ENCODE measurements at regions of chr14 and their contacts with region 1.

Region 1: GRCh38 chr14:105398044-105398725 is at the start of gene TEX22:
- DNase-seq: peak; percentile 95
- ATAC-seq: peak; percentile 94
- H3K4me3 Mint-ChIP-seq: peak within 1 kb of the TSS; percentile 91
- H3K27ac Mint-ChIP-seq: peak within 1 kb of the TSS; percentile 92
- H3K4me1 Mint-ChIP-seq: peaks cover 23% of the 10 kb centered on the region
- H3K27me3 Mint-ChIP-seq: no peaks in the 10 kb centered on the region
- CTCF ChIP-seq: no peak
- total RNA-seq, gene TEX22: 1.2 to 2.2 TPM

Region 2: DNA sequence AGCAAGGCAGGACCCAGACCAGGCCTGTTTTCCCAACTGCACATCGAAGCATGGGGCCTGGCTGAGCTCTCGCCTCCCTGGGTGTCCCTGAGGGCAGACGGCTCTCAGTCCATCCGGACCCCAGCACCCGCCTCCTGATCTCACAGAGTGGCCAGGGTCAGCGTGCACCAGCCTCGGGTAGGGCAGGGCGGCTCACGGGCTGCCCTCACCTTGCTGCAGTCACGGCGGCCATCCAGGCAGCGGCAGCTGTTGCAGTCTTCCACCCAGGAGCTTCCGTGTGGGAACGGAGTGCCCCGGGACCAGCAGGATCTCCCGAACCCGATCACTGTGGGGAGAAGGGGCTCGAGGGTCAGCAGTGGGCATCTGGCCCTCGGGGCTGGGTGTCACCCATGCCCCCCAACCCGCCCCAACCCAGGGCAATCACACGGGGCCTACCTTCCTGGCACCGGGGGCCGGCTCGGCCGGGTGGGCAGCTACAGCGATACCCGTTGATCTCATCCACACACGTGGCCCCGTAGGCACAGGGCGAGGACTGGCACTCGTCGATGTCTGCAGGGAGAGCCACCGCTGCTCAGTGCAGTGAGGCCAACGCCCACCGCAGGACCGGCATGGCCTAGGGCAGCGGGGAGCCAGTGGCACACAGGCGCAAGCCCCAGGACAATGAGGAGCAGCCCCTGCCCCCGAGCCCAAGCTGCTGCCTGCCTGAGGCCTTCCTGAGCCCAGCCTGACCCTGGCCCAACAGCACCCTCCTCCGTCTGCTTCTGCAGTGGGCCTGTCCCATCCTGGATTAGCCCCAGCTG is 251.8 kb before region 1 on chr14:
- CTCF ChIA-PET with region 1: no interaction called
- POLR2A ChIA-PET with region 1: no interaction called
- intact Hi-C with region 1: no loop called
- DNase-seq: no peak
- ATAC-seq: no peak
- H3K4me3 Mint-ChIP-seq: no peak overlapping the region
- H3K27ac Mint-ChIP-seq: no peak overlapping the region
- H3K4me1 Mint-ChIP-seq: no peaks in the 10 kb centered on the region
- H3K27me3 Mint-ChIP-seq: no peaks in the 10 kb centered on the region
- CTCF ChIP-seq: no peak

Region 3: DNA sequence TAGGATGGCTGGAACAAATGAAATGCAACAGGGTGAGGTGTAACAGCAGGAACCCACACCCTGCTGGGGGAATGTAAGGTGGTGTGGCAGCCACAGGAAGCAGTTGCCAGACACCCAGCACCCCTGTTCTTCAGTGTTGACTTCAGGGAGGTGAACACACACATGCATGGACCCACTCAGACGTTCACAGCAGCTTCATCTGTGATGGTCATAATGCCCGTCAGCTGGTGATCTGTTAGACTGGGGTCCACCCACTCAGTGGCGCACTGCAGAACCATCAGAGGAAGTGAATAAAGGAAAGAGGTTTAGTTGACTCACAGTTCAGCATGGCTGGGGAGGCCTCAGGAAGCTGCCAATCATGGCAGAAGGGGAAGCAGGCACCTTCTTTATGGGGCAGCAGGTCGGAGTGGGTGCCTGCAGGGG is 22.5 kb before region 1 on chr14:
- CTCF ChIA-PET with region 1: interaction called, 17 read pairs
- POLR2A ChIA-PET with region 1: no interaction called
- intact Hi-C with region 1: no loop called
- DNase-seq: peak; percentile 92
- ATAC-seq: peak; percentile 83
- H3K4me3 Mint-ChIP-seq: no peak overlapping the region
- H3K27ac Mint-ChIP-seq: peak overlapping the region; percentile 67
- H3K4me1 Mint-ChIP-seq: peaks cover 13% of the 10 kb centered on the region
- H3K27me3 Mint-ChIP-seq: no peaks in the 10 kb centered on the region
- CTCF ChIP-seq: no peak

Region 4: DNA sequence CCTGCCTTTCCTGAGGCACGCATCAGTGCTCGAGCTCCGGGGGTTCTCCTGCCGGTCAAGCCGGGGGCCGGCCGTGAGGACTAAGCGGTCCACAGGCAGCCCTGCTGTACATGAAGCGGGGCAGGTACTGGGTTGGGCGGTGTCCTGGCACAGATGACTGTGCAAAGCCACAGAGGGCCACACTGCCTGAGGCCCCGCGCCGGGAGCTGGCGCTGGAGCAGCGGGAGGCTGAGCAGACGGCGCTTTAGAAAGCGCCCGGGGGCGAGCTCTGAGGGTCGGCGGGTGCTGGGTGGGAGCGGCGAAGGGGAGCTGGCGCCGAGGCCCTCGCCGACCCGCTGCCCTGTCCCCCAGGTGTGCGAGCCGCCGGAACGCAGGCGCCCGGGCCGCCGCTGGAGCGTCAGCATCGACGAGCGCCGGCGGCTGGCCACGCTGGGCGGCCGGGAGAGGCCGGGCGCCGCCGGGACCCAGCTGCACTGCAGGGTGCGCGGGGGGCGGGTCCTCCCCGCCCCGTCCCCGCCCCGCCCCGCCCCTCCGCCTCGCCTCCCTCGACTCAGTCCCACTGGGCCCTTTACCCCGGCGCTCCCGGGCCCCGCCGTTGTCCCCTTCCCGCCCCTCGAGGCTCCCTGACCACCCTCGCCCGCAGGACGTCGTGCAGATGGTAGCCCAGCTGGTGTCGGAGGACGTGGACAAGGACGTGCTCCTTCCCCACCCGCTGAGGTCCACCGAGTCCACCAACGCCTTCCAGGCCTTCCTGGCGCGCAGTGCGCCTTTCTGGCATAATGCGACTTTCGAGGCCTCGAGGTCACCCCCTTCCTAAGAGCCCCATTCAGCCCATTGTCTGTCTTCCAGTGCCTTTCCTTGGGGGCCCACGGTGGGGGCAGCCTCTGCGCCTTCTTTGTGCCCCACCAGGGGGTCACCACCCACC is 13.1 kb after region 1 on chr14:
- CTCF ChIA-PET with region 1: interaction called, 8 read pairs
- POLR2A ChIA-PET with region 1: interaction called, 14 read pairs
- intact Hi-C with region 1: no loop called
- DNase-seq: peak; percentile 21
- ATAC-seq: peak; percentile 40
- H3K4me3 Mint-ChIP-seq: peak overlapping the region; percentile 19
- H3K27ac Mint-ChIP-seq: no peak overlapping the region
- H3K4me1 Mint-ChIP-seq: peaks cover 12% of the 10 kb centered on the region
- H3K27me3 Mint-ChIP-seq: peaks cover 24% of the 10 kb centered on the region
- CTCF ChIP-seq: no peak

Region 5: DNA sequence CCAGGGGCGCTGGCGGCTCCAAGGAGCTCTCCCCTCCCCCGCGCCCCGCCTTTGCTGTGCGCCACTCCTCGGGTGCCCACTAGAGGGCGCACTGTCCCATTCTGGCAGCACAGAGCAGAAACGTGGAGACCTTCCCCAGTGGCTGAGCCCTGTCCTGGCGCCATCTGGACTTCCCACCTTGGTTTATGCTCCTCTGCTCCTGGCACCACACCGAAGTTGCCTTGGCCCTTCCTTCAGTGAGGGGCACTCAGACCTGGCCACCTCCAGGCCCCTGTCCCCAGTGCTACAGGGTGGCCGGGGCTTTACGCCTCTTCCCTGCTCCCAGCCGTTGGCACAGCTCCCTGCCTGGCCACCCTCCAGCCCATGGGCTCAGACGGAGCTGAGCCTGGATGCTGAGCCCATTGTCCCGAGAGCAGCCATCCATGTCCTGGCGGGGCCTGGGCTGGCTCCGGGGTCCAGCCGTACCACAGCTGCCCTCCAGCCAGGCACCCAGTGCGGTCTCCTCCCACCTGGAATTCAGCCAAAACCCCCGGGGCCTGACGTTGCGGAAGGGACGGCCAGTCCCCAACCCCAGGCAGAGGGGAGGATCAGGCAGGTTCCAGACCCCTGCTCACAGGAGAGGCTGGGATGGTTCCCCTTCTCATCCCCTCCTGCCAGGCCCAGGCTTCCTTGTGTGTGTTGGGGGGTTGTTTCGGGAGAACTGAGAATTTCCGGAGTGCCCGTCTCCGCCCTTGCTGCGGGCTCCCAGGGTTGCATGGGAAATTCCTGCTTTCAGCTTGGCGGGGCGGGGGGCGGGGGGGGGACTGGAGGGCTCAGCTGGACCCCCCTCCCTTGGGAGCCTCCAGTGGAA is 83.0 kb after region 1 on chr14:
- CTCF ChIA-PET with region 1: interaction called, 15 read pairs
- POLR2A ChIA-PET with region 1: interaction called, 4 read pairs
- intact Hi-C with region 1: no loop called
- DNase-seq: peak; percentile 92
- ATAC-seq: peak; percentile 68
- H3K4me3 Mint-ChIP-seq: peak overlapping the region; percentile 65
- H3K27ac Mint-ChIP-seq: peak overlapping the region; percentile 96
- H3K4me1 Mint-ChIP-seq: peaks cover 52% of the 10 kb centered on the region
- H3K27me3 Mint-ChIP-seq: peaks cover 21% of the 10 kb centered on the region
- CTCF ChIP-seq: peak; percentile 93

Measured in activated CD8-positive, alpha-beta T cell treated with anti-CD3 and anti-CD28 coated beads for 36 hours (primary cell).